Sigmoid colon (tissue), 7 donors: ENCODE measurements at regions of chr5 and their contacts with region 1.

Region 1: DNA sequence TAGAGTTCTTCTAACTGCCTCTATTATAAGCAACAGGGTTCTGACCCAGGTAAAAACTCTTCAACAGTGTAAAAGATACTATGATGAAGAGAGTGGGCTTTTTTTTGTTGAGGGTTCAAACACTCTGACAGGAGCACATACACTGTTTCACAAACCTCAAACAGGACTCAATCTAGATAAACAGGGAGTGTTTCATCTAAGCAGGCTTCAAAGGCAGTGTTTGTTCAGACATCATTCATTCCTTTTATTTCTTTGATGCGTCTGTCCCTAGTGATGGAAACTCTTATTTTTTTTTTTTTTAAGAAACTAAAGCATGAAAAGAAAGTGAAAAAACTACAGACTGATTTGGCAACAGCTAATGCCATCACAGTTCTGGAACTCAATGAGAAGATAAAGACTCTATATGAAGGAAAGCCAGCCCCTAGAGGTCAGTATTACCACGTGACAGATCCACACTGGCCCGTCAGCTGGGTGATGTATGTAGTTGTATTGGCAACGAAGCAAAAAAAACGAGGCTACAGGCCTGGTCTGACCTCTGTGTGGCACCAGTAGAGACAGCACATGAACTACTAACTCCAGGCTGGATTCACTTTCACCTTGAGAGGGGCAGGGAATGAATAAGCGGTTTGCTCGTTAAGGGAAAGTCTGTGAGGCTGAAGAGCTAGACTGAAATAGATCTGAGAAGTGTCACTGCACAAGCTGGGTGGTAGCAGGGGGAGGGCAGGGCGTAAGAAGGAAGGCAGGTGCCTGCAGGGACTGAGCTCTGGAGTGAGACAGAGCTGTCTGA is 172.2 kb downstream of the CCDC192 start:
- DNase-seq: no peak
- H3K4me3 ChIP-seq: no peak overlapping the region
- H3K27ac ChIP-seq: peak overlapping the region; percentile 34 to 59 (median 48)
- H3K4me1 ChIP-seq: peaks cover 0 to 31% (median 26%) of the 10 kb centered on the region in 4 donors
- H3K27me3 ChIP-seq: no peaks in the 10 kb centered on the region
- CTCF ChIP-seq: peak in 1 of 4 experiments; percentile 6
- EP300 ChIP-seq: no peak
- POLR2A ChIP-seq: no peak

Region 2: DNA sequence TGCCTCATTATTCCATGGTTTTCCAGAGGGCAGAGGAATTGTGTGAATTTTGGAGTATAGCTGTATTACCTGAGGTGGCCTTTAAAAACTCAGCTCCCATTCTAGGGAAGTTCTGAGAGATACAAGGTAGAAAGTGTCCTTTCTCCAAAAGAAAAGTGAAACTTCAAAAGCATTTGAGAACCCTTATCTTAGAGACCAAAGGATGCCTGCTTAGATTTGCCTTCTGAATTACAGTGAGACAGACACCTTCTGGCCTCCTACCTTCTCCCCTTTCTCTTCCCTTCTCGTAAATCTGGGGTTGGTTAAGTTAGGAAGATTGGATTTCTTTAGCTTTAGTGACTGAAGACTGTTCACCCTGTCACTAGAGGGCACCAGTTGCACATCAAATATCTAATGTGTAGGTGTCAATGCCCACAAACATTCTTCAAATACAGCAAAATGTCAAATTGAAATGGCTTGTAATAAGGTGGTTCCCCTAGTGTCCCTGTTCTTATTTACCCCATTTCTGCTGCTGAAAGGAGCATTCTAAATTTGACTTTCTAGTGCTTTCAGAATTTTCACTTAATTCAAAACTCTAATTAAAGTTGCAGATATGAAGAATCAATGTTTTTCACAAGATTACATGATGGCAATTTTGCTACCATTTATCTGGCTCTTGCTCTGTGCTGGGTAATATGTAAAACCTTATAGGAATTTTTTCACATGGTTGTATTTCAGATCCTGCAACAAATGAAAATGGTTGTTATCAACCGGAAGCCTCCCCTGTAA is 311.2 kb before region 1 on chr5:
- intact Hi-C with region 1: loop called (anchors 10 kb)
- DNase-seq: no peak
- H3K4me3 ChIP-seq: no peak overlapping the region
- H3K27ac ChIP-seq: peak overlapping the region in 2 of 4 donors; percentile 9 to 56
- H3K4me1 ChIP-seq: peaks cover 0 to 32% (median 22%) of the 10 kb centered on the region in 4 donors
- H3K27me3 ChIP-seq: no peaks in the 10 kb centered on the region
- CTCF ChIP-seq: peak; percentile 26 to 66 (median 51)
- EP300 ChIP-seq: no peak
- POLR2A ChIP-seq: no peak

Region 3: DNA sequence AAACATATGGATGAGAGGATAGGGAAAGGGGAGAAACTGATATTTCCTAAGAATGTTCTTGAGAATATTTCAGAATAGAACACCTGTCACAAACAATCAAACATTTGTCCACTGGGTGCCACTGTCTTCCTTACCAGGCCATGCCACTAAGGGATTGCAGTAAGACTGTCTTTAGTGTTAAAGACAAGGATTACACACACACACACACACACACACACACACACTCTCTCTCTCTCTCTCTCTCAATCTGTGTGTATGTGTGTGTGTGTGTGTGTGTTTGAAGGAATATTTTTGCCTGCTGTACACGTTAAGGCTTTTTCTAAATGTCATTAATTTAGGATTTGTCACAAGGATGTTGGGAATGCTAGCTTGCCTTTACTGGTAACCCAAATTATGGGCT is 117.9 kb before region 1 on chr5:
- intact Hi-C with region 1: loop called (anchors 10 kb)
- DNase-seq: no peak
- H3K4me3 ChIP-seq: no peak overlapping the region
- H3K27ac ChIP-seq: peak overlapping the region in 1 of 4 donors; percentile 28
- H3K4me1 ChIP-seq: peaks cover 0 to 32% (median 18%) of the 10 kb centered on the region in 4 donors
- H3K27me3 ChIP-seq: no peaks in the 10 kb centered on the region
- CTCF ChIP-seq: peak in 3 of 4 experiments; percentile 28 to 38 (median 37)
- EP300 ChIP-seq: no peak
- POLR2A ChIP-seq: no peak

Region 4: GRCh38 chr5:127950720-127951391 is 75.4 kb after region 1 on chr5:
- intact Hi-C with region 1: loop called (anchors 2 kb)
- DNase-seq: no peak
- H3K4me3 ChIP-seq: peak overlapping the region in 1 of 4 donors; percentile 5
- H3K27ac ChIP-seq: peak overlapping the region in 3 of 4 donors; percentile 64 to 71 (median 65)
- H3K4me1 ChIP-seq: peaks cover 0 to 24% (median 10%) of the 10 kb centered on the region in 4 donors
- H3K27me3 ChIP-seq: no peaks in the 10 kb centered on the region
- CTCF ChIP-seq: no peak
- EP300 ChIP-seq: no peak
- POLR2A ChIP-seq: no peak

Region 5: GRCh38 chr5:128201065-128201926 is 325.9 kb after region 1 on chr5:
- intact Hi-C with region 1: loop called (anchors 5 kb)
- DNase-seq: peak; percentile 89
- H3K4me3 ChIP-seq: peak overlapping the region in 2 of 4 donors; percentile 19 to 24
- H3K27ac ChIP-seq: no peak overlapping the region
- H3K4me1 ChIP-seq: peaks cover 0 to 9% (median 6%) of the 10 kb centered on the region in 4 donors
- H3K27me3 ChIP-seq: peaks cover 0 to 2% (median 0%) of the 10 kb centered on the region in 3 donors
- CTCF ChIP-seq: peak; percentile 73 to 88 (median 78)
- EP300 ChIP-seq: no peak
- POLR2A ChIP-seq: no peak